ENCODE measurements at regions of chr2 and their contacts with region 1.

Region 1: DNA sequence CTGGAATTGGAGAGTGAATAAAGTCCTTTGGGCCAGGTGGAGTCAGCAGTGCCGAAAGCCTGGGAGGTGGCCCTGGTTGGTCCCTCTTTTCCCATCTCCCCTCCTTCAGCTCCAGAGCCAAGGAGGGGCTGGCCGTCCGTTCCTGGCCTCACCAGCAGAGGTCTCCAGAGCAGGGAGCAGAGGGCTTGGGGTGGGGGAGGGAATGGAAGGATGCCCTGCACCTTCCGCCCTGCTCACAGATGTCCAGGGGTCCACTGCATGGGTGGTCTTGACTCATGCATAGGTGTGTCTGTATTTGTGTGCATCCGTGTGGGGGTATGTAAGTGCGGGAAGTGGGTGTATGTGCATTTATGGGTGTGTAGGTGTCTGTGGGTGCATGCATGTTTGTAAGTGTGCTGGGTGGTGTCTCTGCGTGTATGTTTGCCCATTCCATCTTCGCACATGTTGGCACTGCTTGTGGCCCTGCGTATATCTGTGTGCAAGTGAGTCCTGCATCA is 201.8 kb downstream of the ZFP36L2 start:
- DNase-seq: peak; percentile 57 to 78
- ATAC-seq: peak; percentile 81 to 89
- H3K4me3 ChIP-seq: no peak overlapping the region
- H3K27ac ChIP-seq: peak overlapping the region; percentile 23 to 48; a peak in 4 of 6 replicates
- H3K4me1 ChIP-seq: peaks cover 3% of the 10 kb centered on the region; the same call in 1 of the 3 replicates
- CTCF ChIP-seq: peak; percentile 79
- EP300 ChIP-seq: no peak
- POLR2A ChIP-seq: no peak
- RAD21 ChIP-seq: peak; percentile 88 to 92

Region 2: DNA sequence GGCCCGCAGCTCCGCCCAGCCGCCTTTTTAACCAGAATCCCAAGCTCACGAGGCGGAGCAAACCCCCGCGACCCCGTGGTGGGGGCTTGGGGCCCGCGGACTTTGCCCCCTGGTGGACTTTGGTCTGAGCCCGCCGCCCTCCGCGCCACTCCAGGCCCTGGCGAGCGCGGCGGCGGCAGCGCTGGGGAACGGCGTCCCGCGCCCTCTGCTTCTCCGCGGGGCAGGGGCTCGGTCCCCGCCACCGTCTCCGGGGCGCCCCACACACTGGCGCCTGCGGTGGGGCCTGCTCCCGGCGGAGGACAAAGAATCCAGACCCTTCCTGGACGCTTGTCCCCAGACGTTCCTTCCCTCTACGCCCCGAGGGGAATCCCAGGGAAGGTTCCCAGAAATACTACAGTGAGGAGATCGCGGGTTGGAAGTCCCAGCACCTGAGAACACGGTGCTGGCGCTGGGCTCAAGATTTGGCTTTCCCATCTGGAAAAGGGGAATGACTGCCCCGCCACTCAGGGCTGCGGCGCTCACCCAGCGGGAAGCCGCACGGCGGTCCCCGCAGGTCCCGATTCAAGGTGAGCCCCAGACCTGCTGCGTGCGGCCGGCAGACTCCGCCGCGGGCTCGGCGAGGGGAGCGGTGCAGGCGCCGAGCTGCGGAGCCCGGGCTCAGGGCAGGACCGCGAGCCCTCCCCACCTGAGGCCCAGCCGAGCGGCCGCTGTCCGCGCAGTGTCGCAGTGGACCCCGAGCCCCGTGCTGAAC is 231.8 kb before region 1 on chr2 and contains the start of gene HAAO:
- CTCF ChIA-PET with region 1: no interaction called
- POLR2A ChIA-PET with region 1: no interaction called
- DNase-seq: no peak
- ATAC-seq: no peak
- H3K4me3 ChIP-seq: no peak within 1 kb of the TSS
- H3K27ac ChIP-seq: no peak within 1 kb of the TSS
- H3K4me1 ChIP-seq: peaks cover 7% of the 10 kb centered on the region; the same call in 2 of the 3 replicates
- CTCF ChIP-seq: no peak
- EP300 ChIP-seq: no peak
- POLR2A ChIP-seq: no peak
- RAD21 ChIP-seq: no peak
- polyA plus RNA-seq, gene HAAO: not detected in 2 replicates

Region 3: DNA sequence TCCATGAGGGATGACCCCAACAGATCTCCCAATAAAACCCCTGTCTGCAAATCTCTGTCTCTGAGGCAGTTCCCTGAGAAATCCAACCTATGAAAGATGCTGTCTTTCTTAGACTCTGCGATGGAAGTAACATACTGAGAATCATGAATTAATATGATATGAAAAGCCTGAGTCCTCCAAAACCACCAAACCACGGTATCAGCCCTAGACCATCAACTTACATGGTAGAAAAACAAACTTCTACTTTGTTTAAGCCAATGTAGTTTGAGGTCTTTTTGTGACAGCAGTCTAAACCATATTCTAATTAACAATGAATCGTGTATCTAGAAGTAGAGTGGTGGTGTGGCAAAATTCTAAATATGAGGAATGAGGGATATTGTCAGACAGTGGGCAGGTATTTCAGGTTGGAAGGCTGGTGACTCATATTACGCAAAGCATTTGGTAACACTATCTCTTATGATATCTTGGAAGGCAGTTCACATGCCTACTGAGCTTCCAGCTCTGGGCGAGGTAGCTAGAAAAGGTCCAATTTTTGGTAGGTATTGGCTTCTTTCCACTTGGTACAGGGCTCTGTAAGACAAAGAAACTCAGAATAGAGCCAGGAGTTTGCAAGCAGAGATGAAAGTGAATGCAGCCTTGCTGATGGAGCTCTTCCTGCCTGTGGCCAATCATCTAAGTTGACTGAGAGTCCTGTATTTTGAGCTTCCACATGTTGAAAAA is 14.0 kb before region 1 on chr2:
- CTCF ChIA-PET with region 1: interaction called, 10 read pairs
- POLR2A ChIA-PET with region 1: no interaction called
- DNase-seq: no peak
- ATAC-seq: peak in 1 of 2 experiments; percentile 46; a peak in 3 of 6 replicates
- H3K4me3 ChIP-seq: no peak overlapping the region
- H3K27ac ChIP-seq: peak overlapping the region in 1 of 2 experiments; percentile 29; a peak in 1 of 6 replicates
- H3K4me1 ChIP-seq: peaks cover 16% of the 10 kb centered on the region
- CTCF ChIP-seq: no peak
- EP300 ChIP-seq: no peak
- POLR2A ChIP-seq: no peak
- RAD21 ChIP-seq: no peak

Region 4: GRCh38 chr2:43041661-43042360 is 17.2 kb after region 1 on chr2:
- CTCF ChIA-PET with region 1: interaction called, 16 read pairs
- POLR2A ChIA-PET with region 1: no interaction called
- DNase-seq: peak; percentile 80 to 84
- ATAC-seq: peak; percentile 77 to 90
- H3K4me3 ChIP-seq: no peak overlapping the region
- H3K27ac ChIP-seq: peak overlapping the region; percentile 80 to 90
- H3K4me1 ChIP-seq: peaks cover 41% of the 10 kb centered on the region
- CTCF ChIP-seq: no peak
- EP300 ChIP-seq: peak in 1 of 2 experiments; percentile 77; a peak in 1 of 5 replicates
- POLR2A ChIP-seq: no peak
- RAD21 ChIP-seq: peak in 1 of 2 experiments; percentile 30; a peak in 2 of 5 replicates

Region 5: GRCh38 chr2:43131024-43131889 is 106.7 kb after region 1 on chr2:
- CTCF ChIA-PET with region 1: interaction called, 26 read pairs
- POLR2A ChIA-PET with region 1: no interaction called
- DNase-seq: peak; percentile 87 to 96
- ATAC-seq: peak; percentile 86 to 87
- H3K4me3 ChIP-seq: no peak overlapping the region
- H3K27ac ChIP-seq: peak overlapping the region; percentile 75 to 86
- H3K4me1 ChIP-seq: peaks cover 31% of the 10 kb centered on the region
- CTCF ChIP-seq: peak; percentile 89
- EP300 ChIP-seq: peak in 1 of 2 experiments; percentile 12; a peak in 1 of 5 replicates
- POLR2A ChIP-seq: no peak
- RAD21 ChIP-seq: peak; percentile 94 to 96

Region 6: DNA sequence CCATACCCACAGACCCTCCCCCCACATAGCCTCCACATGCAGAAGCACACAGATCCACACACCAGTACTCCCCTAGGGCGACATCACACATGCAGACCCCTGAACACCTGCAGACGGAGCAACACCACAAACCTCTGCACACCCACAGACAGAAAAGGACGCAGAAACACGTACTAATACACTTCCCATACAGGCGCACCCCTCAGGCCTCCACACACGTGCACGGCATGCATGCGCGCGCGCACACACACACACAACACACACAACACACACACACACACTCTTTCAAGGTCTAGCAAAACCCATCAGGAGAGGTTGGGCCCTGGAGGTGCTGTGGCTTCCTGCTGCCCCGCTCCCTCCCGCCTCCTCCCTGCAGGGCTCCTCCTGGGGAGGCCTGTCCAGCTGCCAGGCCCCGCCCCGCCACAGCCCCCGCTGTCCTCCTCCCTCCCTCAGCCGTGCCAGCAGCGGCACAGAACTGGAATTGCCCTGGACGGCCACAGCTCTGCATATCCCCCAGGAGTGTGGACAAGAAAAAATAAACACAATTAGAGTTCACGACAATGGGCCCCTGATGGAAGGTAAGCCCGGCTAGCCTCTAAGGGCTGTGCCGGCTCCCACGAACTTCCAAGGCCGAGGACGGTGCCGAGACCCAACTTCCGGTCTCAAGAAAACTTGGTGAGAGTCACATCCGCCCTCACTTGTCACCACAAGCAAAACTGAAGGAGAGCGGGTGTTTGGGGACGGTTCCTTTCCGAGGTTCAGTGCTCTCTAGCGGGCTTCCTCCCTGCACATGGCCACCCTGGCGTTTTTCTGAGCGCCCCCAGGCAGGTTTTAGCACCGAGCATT is 195.0 kb after region 1 on chr2:
- CTCF ChIA-PET with region 1: interaction called, 85 read pairs
- POLR2A ChIA-PET with region 1: no interaction called
- DNase-seq: peak; percentile 81 to 93
- ATAC-seq: peak; percentile 71 to 84
- H3K4me3 ChIP-seq: peak overlapping the region; percentile 44
- H3K27ac ChIP-seq: peak overlapping the region; percentile 89 to 95
- H3K4me1 ChIP-seq: peaks cover 52% of the 10 kb centered on the region
- CTCF ChIP-seq: no peak
- EP300 ChIP-seq: no peak
- POLR2A ChIP-seq: peak; percentile 48
- RAD21 ChIP-seq: peak; percentile 16 to 40; a peak in 3 of 5 replicates